ENCODE measurements at regions of chr9 and their contacts with region 1.

Region 1: DNA sequence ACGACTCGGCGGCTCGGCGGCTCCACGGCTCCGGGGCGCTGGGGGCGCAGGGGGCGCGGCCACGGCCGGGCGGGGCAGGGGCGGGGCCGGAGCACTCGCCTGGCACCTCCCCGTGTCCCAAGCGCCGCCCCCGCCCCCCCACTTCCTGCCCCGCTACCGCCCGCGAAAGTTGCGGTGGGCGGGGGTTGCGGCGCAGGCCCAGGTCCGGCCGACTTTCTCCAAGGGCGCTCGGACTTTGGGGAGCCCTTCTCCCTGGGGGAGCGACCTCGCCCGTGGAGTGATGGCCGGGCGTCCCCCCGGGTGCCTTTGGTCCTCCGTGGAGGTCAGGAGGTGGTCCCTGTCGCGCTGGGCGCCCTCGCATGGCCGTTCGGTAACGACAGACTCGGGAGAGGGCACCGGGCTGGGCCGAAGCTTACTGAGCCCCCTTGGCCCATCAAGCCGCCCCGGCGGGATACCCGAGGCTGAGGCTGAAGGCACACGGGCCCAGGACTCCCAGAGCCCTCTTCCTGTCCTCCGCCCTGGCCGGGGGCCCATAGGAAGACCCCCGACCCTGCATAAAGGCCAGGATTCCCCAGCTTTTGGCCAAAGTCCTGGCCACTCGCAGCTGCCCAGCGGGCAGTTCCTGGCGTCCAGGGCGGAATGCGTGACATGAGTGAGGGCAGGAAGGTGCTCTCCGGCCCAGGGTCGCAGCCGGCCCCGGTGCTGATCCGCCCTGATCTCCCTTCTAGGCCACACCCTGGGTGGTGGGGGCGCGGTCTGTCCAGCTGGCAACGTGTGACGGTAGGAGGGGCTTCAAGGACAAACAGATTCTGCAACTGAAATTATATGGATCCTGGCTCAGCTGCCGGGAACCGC is 883 bp upstream of the VAV2 start:
- DNase-seq: peak; percentile 64 to 84
- ATAC-seq: peak; percentile 53 to 82
- H3K4me3 ChIP-seq: peak overlapping the region; percentile 98
- H3K27ac ChIP-seq: peak overlapping the region; percentile 98 to 99
- H3K4me1 ChIP-seq: peaks cover 38% of the 10 kb centered on the region
- CTCF ChIP-seq: peak; percentile 64; the same call in 2 of the 3 replicates
- EP300 ChIP-seq: no peak
- POLR2A ChIP-seq: peak; percentile 62
- RAD21 ChIP-seq: peak in 1 of 2 experiments; percentile 46; a peak in 2 of 5 replicates

Region 2: GRCh38 chr9:133742849-133743444 is 250.1 kb before region 1 on chr9:
- CTCF ChIA-PET with region 1: interaction called, 23 read pairs
- POLR2A ChIA-PET with region 1: no interaction called
- DNase-seq: peak; percentile 78 to 95
- ATAC-seq: peak; percentile 86 to 96
- H3K4me3 ChIP-seq: no peak overlapping the region
- H3K27ac ChIP-seq: no peak overlapping the region
- H3K4me1 ChIP-seq: no peaks in the 10 kb centered on the region; the same call in 2 of the 3 replicates
- CTCF ChIP-seq: peak; percentile 86
- EP300 ChIP-seq: no peak
- POLR2A ChIP-seq: no peak
- RAD21 ChIP-seq: peak; percentile 41 to 59; a peak in 3 of 5 replicates

Region 3: DNA sequence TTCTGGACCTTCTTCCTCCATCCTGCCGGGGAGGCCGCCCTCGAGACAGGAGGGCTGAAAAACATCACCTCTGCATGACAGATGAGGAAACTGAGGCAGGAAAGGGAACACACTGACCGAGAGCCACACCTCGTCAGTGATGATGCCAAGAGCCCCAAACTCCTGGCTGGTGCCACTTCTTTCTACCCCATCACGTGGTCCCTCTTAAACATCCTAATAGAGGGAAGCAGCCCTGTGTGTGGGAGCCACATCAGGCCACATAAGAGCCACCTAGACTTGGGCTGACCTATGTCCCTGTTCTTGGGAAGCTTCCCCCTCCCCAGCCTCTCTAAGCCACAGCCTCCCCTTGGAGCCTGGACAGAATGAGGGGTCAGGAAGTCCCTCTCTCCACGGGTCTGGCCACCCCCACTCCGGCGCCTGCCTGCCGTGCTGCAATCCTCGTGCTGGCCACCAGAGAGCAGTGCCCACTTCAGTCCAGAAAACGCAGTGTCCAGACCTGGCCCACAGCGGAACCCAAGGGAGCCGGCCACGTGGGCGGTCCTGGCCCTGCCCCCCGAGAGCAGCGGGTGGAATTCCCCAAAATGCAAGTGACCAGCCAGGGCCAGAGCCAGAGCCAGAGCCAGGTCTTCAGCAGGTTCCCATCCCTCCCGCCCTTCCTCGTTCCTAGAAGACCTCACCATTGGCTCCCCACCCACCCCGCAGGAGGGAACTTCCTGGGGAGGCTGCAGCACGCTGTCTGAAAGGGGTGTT is 200.1 kb before region 1 on chr9:
- CTCF ChIA-PET with region 1: interaction called, 348 read pairs
- POLR2A ChIA-PET with region 1: interaction called, 3 read pairs
- DNase-seq: peak; percentile 70 to 81
- ATAC-seq: peak; percentile 80 to 92
- H3K4me3 ChIP-seq: no peak overlapping the region
- H3K27ac ChIP-seq: peak overlapping the region; percentile 63 to 81
- H3K4me1 ChIP-seq: peaks cover 9% of the 10 kb centered on the region
- CTCF ChIP-seq: peak; percentile 78
- EP300 ChIP-seq: no peak
- POLR2A ChIP-seq: no peak
- RAD21 ChIP-seq: peak; percentile 88 to 90

Region 4: GRCh38 chr9:133839822-133840329 is 153.1 kb before region 1 on chr9:
- CTCF ChIA-PET with region 1: interaction called, 20 read pairs
- POLR2A ChIA-PET with region 1: no interaction called
- DNase-seq: no peak
- ATAC-seq: no peak
- H3K4me3 ChIP-seq: no peak overlapping the region
- H3K27ac ChIP-seq: no peak overlapping the region
- H3K4me1 ChIP-seq: 0 out of 3 replicates have a peak, but pooled peaks cover 5% of the 10 kb centered on the region
- CTCF ChIP-seq: no peak
- EP300 ChIP-seq: no peak
- POLR2A ChIP-seq: no peak
- RAD21 ChIP-seq: no peak

Region 5: GRCh38 chr9:133910855-133911514 is 82.0 kb before region 1 on chr9:
- CTCF ChIA-PET with region 1: interaction called, 14 read pairs
- POLR2A ChIA-PET with region 1: no interaction called
- DNase-seq: no peak
- ATAC-seq: no peak
- H3K4me3 ChIP-seq: no peak overlapping the region
- H3K27ac ChIP-seq: no peak overlapping the region
- H3K4me1 ChIP-seq: no peaks in the 10 kb centered on the region
- CTCF ChIP-seq: no peak
- EP300 ChIP-seq: no peak
- POLR2A ChIP-seq: no peak
- RAD21 ChIP-seq: no peak

Region 6: GRCh38 chr9:133979273-133979920 is 13.6 kb before region 1 on chr9:
- CTCF ChIA-PET with region 1: interaction called, 48 read pairs
- POLR2A ChIA-PET with region 1: no interaction called
- DNase-seq: no peak
- ATAC-seq: no peak
- H3K4me3 ChIP-seq: no peak overlapping the region
- H3K27ac ChIP-seq: no peak overlapping the region
- H3K4me1 ChIP-seq: 0 out of 3 replicates have a peak, but pooled peaks cover 3% of the 10 kb centered on the region
- CTCF ChIP-seq: no peak
- EP300 ChIP-seq: no peak
- POLR2A ChIP-seq: no peak
- RAD21 ChIP-seq: no peak

Region 7: GRCh38 chr9:134046894-134047681 is 54.1 kb after region 1 on chr9:
- CTCF ChIA-PET with region 1: interaction called, 12 read pairs
- POLR2A ChIA-PET with region 1: no interaction called
- DNase-seq: no peak
- ATAC-seq: no peak
- H3K4me3 ChIP-seq: no peak overlapping the region
- H3K27ac ChIP-seq: no peak overlapping the region
- H3K4me1 ChIP-seq: no peaks in the 10 kb centered on the region
- CTCF ChIP-seq: no peak
- EP300 ChIP-seq: no peak
- POLR2A ChIP-seq: no peak
- RAD21 ChIP-seq: no peak

Region 8: DNA sequence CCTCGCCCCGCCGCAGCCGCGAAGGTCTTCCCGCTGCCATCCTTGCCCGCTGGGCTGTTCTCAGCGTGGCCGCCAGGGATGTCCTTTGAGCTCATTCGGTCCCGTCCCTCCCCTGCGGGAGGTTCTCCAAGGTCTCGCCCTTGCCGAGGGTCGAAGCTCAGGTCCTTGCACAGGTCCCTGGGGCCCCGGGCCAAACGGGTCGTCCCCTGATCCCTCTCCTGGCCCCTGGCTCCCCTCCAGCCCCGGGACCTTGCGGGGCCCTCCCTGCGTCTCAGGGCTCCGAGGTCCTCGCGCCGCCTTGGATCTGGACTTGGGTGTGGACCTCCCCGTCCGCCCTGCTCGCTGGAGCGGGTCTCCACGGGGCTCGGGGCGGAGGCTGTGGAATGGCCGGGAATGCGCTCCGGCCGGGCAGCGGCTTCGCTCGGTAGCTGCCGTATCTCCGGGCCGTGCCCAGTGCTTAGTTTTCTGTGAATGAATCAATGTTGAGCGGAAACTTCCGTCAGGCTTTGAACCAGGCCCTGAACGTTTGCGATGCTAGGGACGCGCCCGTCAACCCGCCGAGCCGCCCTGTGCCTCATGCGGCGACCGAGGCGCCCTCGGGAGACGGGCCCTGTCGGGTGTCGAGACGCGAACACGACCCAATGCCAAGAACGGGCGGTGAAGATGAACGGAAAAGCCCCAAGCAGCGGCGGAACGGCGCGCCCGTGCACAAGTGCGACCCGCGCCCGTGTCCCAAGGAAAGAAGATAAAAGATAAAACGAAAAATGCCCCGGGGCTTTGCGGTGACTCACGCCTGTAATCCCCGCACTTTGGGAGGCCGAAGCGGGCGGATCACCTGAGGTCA is 170.6 kb after region 1 on chr9:
- CTCF ChIA-PET with region 1: no interaction called
- POLR2A ChIA-PET with region 1: no interaction called
- DNase-seq: no peak
- ATAC-seq: no peak
- H3K4me3 ChIP-seq: no peak overlapping the region; the same call in 2 of the 3 replicates
- H3K27ac ChIP-seq: no peak overlapping the region
- H3K4me1 ChIP-seq: peaks cover 13% of the 10 kb centered on the region; the same call in 2 of the 3 replicates
- CTCF ChIP-seq: no peak
- EP300 ChIP-seq: no peak
- POLR2A ChIP-seq: no peak
- RAD21 ChIP-seq: no peak